T-cell (primary cell): ENCODE measurements at regions of chr1 and their contacts with region 1.

Region 1: DNA sequence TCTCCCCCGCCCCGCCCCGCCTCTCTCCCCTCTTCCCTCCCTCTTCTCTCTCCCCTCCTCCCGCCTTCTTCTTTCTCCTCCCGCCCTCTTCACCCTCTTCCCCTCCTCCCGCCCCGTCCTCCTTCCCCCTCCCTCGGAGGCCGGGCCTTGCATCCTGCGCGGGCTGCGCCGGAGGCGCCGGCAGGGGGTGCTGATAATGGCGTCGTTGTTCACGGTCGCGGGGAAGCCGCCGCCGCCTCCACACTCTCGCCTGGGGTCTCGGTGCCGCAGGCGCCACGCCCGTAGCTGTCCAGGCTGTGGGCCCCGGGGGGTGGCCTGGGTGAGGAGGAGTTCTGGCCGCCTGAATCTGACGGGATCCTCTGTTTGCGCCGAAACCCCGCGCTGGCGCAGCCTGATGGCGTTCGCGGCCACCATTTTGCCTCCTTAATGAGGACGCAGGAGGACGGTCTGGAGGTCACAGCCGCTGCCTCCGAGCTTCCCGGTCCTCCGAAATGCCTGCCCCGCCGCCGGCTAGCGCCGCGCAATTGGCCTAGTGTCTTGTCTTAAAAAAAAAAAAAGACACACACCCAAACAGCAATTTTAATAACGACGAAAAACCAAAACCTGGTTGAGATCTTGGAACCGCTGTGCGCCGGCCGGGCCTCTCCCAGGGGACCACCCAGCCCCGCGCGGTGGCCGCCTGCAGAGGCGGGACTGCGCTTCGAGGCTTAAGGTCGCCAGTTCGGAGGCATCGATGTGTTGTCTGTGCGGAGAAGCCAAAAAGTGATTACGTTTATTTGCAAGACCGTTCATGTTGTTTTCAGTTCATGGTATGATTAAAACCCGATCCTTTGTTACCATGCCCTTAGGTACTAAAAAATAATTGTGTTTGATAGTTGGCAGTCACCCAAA is 106.6 kb upstream of the HNRNPU start:
- DNase-seq: peak; percentile 90 to 96 (median 93)
- ATAC-seq: peak; percentile 78 to 88 (median 83)
- H3K4me3 ChIP-seq: peak overlapping the region; percentile 94 to 99
- H3K4me3 Mint-ChIP-seq: peak overlapping the region; percentile 89 to 97 (median 92)
- H3K27ac ChIP-seq: peak overlapping the region; percentile 100
- H3K27ac Mint-ChIP-seq: peak overlapping the region; percentile 96 to 99
- H3K4me1 ChIP-seq: peaks cover 5 to 15% of the 10 kb centered on the region in 2 experiments
- H3K4me1 Mint-ChIP-seq: peaks cover 0 to 25% (median 17%) of the 10 kb centered on the region in 3 donors
- H3K27me3 ChIP-seq: no peaks in the 10 kb centered on the region
- H3K27me3 Mint-ChIP-seq: no peaks in the 10 kb centered on the region

Region 2: DNA sequence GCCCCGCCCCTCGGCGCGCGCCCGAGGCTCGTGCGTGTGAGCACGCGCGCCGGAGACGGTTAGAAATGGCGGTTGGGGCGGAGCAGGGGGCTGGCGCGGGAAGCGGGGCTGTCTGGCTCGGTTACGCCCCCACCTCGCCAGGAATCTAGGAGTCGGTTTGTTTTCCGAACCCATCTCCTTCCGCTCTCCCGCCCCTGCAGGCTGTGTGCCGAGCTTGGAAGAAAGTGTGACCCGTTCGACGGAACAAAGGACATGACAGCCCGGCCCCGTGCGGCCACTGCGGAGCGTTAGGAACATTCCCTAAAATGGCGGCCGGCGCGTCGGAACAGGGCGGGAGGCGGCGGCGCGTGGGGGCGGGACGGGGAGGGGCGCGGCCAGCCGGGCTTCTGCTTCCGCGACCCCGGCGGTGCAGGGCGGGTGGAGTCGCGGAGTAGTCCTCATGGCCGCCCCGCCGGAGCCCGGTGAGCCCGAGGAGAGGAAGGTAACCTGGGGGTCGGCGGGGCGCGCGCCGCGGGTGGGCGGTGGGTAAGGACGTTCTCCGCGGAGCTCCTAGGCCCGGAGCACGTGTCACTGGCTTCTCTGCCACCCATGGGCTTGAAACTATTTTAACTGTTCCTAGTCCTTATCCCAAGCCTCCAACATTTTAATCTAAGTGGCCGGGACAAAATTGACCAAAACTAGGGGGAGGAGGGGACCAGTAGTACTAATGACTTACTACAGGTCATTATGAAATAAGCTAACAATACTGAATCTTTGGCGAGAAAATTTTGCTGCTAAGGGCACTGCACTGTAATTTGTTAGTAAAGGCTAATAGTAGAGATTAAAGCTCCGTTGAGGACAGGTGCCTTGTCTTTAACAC is 135.4 kb before region 1 on chr1 and contains the start of gene COX20:
- CTCF ChIA-PET with region 1: interaction called, 3 to 7 read pairs
- POLR2A ChIA-PET with region 1: interaction called, 4 to 10 read pairs
- DNase-seq: peak; percentile 73 to 94 (median 86)
- ATAC-seq: peak; percentile 67 to 77 (median 72)
- H3K4me3 ChIP-seq: peak within 1 kb of the TSS; percentile 88 to 96
- H3K4me3 Mint-ChIP-seq: peak within 1 kb of the TSS; percentile 86 to 95 (median 86)
- H3K27ac ChIP-seq: peak within 1 kb of the TSS; percentile 91
- H3K27ac Mint-ChIP-seq: peak within 1 kb of the TSS; percentile 99 to 100
- H3K4me1 ChIP-seq: peaks cover 16 to 31% of the 10 kb centered on the region in 2 experiments
- H3K4me1 Mint-ChIP-seq: peaks cover 47 to 58% (median 52%) of the 10 kb centered on the region in 3 donors
- H3K27me3 ChIP-seq: no peaks in the 10 kb centered on the region
- H3K27me3 Mint-ChIP-seq: no peaks in the 10 kb centered on the region
- total RNA-seq, gene COX20: 17.0 to 32.0 (median 27.5) TPM

Region 3: GRCh38 chr1:244854865-244855578 is 115.9 kb before region 1 on chr1:
- CTCF ChIA-PET with region 1: interaction called in 1 of 2 experiments, 4 read pairs
- POLR2A ChIA-PET with region 1: interaction called, 4 to 11 read pairs
- DNase-seq: no peak
- ATAC-seq: peak in 3 of 4 experiments; percentile 36 to 57 (median 40)
- H3K4me3 ChIP-seq: no peak overlapping the region
- H3K4me3 Mint-ChIP-seq: peak overlapping the region; percentile 43 to 91 (median 47)
- H3K27ac ChIP-seq: peak overlapping the region; percentile 57
- H3K27ac Mint-ChIP-seq: peak overlapping the region; percentile 90
- H3K4me1 ChIP-seq: peaks cover 20 to 59% of the 10 kb centered on the region in 2 experiments
- H3K4me1 Mint-ChIP-seq: peaks cover 93 to 95% (median 95%) of the 10 kb centered on the region in 3 donors
- H3K27me3 ChIP-seq: no peaks in the 10 kb centered on the region
- H3K27me3 Mint-ChIP-seq: no peaks in the 10 kb centered on the region

Region 4: DNA sequence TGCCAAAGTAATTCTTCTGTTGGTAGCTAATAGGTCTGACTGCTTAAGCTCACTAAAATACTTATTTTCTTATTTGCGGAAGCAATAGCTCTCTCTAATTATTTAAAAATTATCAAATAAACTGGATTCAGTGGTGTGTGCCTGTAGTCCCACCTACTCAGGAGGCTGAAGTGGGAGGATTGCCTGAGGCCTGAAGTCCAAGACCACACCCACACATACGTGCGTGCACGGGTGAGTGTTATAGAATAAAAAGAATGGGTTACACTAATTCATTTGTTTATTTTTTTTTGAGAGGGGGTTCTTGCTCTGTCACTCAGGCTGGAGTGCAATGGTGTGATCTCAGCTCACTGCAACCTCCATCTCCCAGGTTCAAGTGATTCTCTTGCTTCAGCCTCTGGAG is 12.3 kb before region 1 on chr1:
- CTCF ChIA-PET with region 1: no interaction called
- POLR2A ChIA-PET with region 1: interaction called in 1 of 2 experiments, 11 read pairs
- DNase-seq: no peak
- ATAC-seq: no peak
- H3K4me3 ChIP-seq: no peak overlapping the region
- H3K4me3 Mint-ChIP-seq: no peak overlapping the region
- H3K27ac ChIP-seq: no peak overlapping the region
- H3K27ac Mint-ChIP-seq: no peak overlapping the region
- H3K4me1 ChIP-seq: peaks cover 2 to 5% of the 10 kb centered on the region in 2 experiments
- H3K4me1 Mint-ChIP-seq: peaks cover 2 to 8% (median 2%) of the 10 kb centered on the region in 3 donors
- H3K27me3 ChIP-seq: peaks cover 0 to 5% of the 10 kb centered on the region in 2 experiments
- H3K27me3 Mint-ChIP-seq: peaks cover 0 to 5% of the 10 kb centered on the region in 2 donors

Region 5: GRCh38 chr1:245031041-245031440 is 60.1 kb after region 1 on chr1:
- CTCF ChIA-PET with region 1: interaction called in 1 of 2 experiments, 3 read pairs
- POLR2A ChIA-PET with region 1: interaction called in 1 of 2 experiments, 14 read pairs
- DNase-seq: no peak
- ATAC-seq: no peak
- H3K4me3 ChIP-seq: no peak overlapping the region
- H3K4me3 Mint-ChIP-seq: no peak overlapping the region
- H3K27ac ChIP-seq: no peak overlapping the region
- H3K27ac Mint-ChIP-seq: no peak overlapping the region
- H3K4me1 ChIP-seq: peaks cover 0 to 4% of the 10 kb centered on the region in 2 experiments
- H3K4me1 Mint-ChIP-seq: peaks cover 7 to 17% (median 14%) of the 10 kb centered on the region in 3 donors
- H3K27me3 ChIP-seq: no peaks in the 10 kb centered on the region
- H3K27me3 Mint-ChIP-seq: no peaks in the 10 kb centered on the region

Region 6: GRCh38 chr1:245045087-245045881 is 74.4 kb after region 1 on chr1:
- CTCF ChIA-PET with region 1: interaction called, 6 to 12 read pairs
- POLR2A ChIA-PET with region 1: no interaction called
- DNase-seq: no peak
- ATAC-seq: no peak
- H3K4me3 ChIP-seq: no peak overlapping the region
- H3K4me3 Mint-ChIP-seq: no peak overlapping the region
- H3K27ac ChIP-seq: no peak overlapping the region
- H3K27ac Mint-ChIP-seq: no peak overlapping the region
- H3K4me1 ChIP-seq: no peaks in the 10 kb centered on the region
- H3K4me1 Mint-ChIP-seq: peaks cover 0 to 3% (median 2%) of the 10 kb centered on the region in 3 donors
- H3K27me3 ChIP-seq: no peaks in the 10 kb centered on the region
- H3K27me3 Mint-ChIP-seq: no peaks in the 10 kb centered on the region